Activated B cell treated with CpG ODN at 0.5 μM for 24 hours (primary cell): ENCODE measurements at regions of chr2 and their contacts with region 1.

Region 1: DNA sequence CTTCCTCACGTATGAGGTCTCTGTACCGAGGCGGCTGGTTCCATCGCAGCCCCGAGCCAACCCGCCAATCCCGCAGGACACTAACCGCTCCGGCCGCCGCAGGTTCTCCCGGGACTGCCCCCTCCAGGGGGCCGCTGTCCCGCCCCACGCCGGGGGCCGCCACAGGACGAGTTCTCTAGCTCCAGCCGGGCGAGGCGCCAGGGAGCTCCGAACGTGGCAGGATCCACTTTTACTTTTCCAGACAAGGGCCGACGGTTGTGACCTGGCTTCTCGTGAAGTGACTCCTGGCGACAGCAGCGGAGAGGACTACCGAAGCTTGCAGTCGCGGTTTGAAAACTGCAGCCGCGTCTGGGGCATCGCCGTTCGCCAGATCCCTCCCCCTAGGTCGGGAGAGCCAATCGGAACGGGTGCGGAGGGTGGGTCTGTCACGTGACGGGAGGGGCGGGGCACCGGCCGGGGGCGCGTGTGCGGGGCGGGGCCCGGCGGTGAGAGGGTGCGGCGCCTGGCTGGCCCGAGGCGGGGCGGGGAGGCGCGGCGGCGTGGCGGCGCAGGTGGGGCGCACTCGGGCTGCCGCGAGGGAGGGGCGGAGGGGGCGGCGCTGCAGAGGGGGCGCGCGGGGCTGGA is at the start of gene STK17B:
- DNase-seq: peak; percentile 88
- ATAC-seq: peak; percentile 64
- H3K4me3 Mint-ChIP-seq: peak within 1 kb of the TSS; percentile 99
- H3K27ac Mint-ChIP-seq: peak within 1 kb of the TSS; percentile 98
- H3K4me1 Mint-ChIP-seq: peaks cover 60% of the 10 kb centered on the region
- H3K27me3 Mint-ChIP-seq: no peaks in the 10 kb centered on the region
- CTCF ChIP-seq: no peak
- total RNA-seq, gene STK17B: 203 and 226 TPM in 2 replicates

Region 2: GRCh38 chr2:195967336-195967735 is 204.0 kb before region 1 on chr2:
- CTCF ChIA-PET with region 1: no interaction called
- POLR2A ChIA-PET with region 1: no interaction called
- intact Hi-C with region 1: no loop called
- DNase-seq: no peak
- ATAC-seq: no peak
- H3K4me3 Mint-ChIP-seq: no peak overlapping the region
- H3K27ac Mint-ChIP-seq: no peak overlapping the region
- H3K4me1 Mint-ChIP-seq: no peaks in the 10 kb centered on the region
- H3K27me3 Mint-ChIP-seq: peaks cover 6% of the 10 kb centered on the region
- CTCF ChIP-seq: no peak

Region 3: GRCh38 chr2:196076778-196077568 is 94.4 kb before region 1 on chr2:
- CTCF ChIA-PET with region 1: interaction called, 21 read pairs
- POLR2A ChIA-PET with region 1: interaction called, 19 read pairs
- intact Hi-C with region 1: loop called (anchors 1 kb)
- DNase-seq: no peak
- ATAC-seq: no peak
- H3K4me3 Mint-ChIP-seq: no peak overlapping the region
- H3K27ac Mint-ChIP-seq: peak overlapping the region; percentile 1
- H3K4me1 Mint-ChIP-seq: peaks cover 38% of the 10 kb centered on the region
- H3K27me3 Mint-ChIP-seq: no peaks in the 10 kb centered on the region
- CTCF ChIP-seq: no peak

Region 4: DNA sequence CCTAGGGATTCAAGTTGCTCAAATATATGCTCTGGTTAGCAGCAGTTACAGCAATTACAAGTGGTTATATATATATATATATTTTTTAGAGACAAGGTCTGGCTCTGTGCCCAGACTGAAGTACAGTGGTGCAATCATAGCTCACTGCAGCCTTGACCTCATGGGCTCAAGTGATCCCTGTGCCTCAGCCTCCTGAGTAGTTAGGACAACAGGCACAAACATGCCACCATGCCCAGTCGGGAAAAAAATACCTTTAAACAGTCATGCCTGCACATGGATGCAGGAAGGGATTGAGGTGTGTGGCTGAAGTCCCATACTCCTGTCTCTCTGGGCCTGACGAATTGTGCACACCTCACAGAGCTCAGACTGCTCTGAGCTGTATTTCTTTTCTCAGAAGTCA is 83.2 kb before region 1 on chr2:
- CTCF ChIA-PET with region 1: no interaction called
- POLR2A ChIA-PET with region 1: no interaction called
- intact Hi-C with region 1: no loop called
- DNase-seq: no peak
- ATAC-seq: no peak
- H3K4me3 Mint-ChIP-seq: no peak overlapping the region
- H3K27ac Mint-ChIP-seq: no peak overlapping the region
- H3K4me1 Mint-ChIP-seq: peaks cover 10% of the 10 kb centered on the region
- H3K27me3 Mint-ChIP-seq: no peaks in the 10 kb centered on the region
- CTCF ChIP-seq: no peak

Region 5: GRCh38 chr2:196149948-196150347 is 21.4 kb before region 1 on chr2:
- CTCF ChIA-PET with region 1: interaction called, 6 read pairs
- POLR2A ChIA-PET with region 1: interaction called, 23 read pairs
- intact Hi-C with region 1: loop called (anchors 1 kb)
- DNase-seq: no peak
- ATAC-seq: peak; percentile 71
- H3K4me3 Mint-ChIP-seq: peak overlapping the region; percentile 70
- H3K27ac Mint-ChIP-seq: peak overlapping the region; percentile 93
- H3K4me1 Mint-ChIP-seq: peaks cover 78% of the 10 kb centered on the region
- H3K27me3 Mint-ChIP-seq: no peaks in the 10 kb centered on the region
- CTCF ChIP-seq: no peak

Region 6: DNA sequence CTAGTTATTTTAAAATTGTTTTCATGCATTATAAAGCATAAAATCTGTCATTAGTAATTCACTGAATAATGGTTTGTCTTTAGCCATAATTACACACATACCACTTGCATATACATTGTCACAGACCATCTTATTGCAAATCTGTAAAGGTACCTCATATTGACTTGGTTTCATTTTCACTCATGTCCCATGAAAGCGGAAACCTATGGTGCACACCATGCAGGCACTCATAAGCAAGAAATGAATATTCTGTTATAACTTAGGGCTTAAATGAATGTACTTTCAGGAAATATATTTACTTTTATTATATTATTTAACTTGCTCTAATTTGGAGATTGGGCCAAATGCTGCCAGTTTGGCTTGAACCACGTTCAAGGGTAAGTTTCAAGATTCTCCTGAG is 29.2 kb after region 1 on chr2:
- CTCF ChIA-PET with region 1: interaction called, 3 read pairs
- POLR2A ChIA-PET with region 1: interaction called, 45 read pairs
- intact Hi-C with region 1: no loop called
- DNase-seq: no peak
- ATAC-seq: peak; percentile 82
- H3K4me3 Mint-ChIP-seq: peak overlapping the region; percentile 53
- H3K27ac Mint-ChIP-seq: peak overlapping the region; percentile 80
- H3K4me1 Mint-ChIP-seq: peaks cover 40% of the 10 kb centered on the region
- H3K27me3 Mint-ChIP-seq: no peaks in the 10 kb centered on the region
- CTCF ChIP-seq: no peak

Region 7: GRCh38 chr2:196239622-196240587 is 68.5 kb after region 1 on chr2:
- CTCF ChIA-PET with region 1: interaction called, 17 read pairs
- POLR2A ChIA-PET with region 1: interaction called, 543 read pairs
- intact Hi-C with region 1: loop called (anchors 1 kb)
- DNase-seq: peak; percentile 67
- ATAC-seq: peak; percentile 61
- H3K4me3 Mint-ChIP-seq: peak overlapping the region; percentile 41
- H3K27ac Mint-ChIP-seq: peak overlapping the region; percentile 100
- H3K4me1 Mint-ChIP-seq: peaks cover 89% of the 10 kb centered on the region
- H3K27me3 Mint-ChIP-seq: no peaks in the 10 kb centered on the region
- CTCF ChIP-seq: no peak

Region 8: DNA sequence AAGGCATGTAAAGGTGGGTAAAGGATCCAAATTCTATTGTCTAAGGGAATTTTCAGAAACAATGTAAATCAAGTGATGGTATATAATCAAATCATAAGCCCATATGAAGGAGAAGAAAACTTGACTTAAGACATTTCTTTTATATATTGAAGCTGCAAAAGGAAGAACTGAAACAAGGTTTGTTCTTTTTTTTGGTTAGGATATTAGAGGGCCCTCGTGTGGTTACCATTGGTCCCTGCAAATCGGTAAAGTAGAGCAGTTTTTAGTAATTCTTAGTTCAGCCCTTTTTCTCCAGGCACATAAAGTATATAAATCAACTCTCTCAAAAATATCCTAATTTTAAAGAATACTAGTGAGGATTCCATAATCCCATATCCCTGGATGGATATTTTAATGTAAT is 105.6 kb after region 1 on chr2:
- CTCF ChIA-PET with region 1: interaction called, 22 read pairs
- POLR2A ChIA-PET with region 1: interaction called, 114 read pairs
- intact Hi-C with region 1: loop called (anchors 1 kb)
- DNase-seq: no peak
- ATAC-seq: peak; percentile 48
- H3K4me3 Mint-ChIP-seq: no peak overlapping the region
- H3K27ac Mint-ChIP-seq: peak overlapping the region; percentile 95
- H3K4me1 Mint-ChIP-seq: peaks cover 41% of the 10 kb centered on the region
- H3K27me3 Mint-ChIP-seq: no peaks in the 10 kb centered on the region
- CTCF ChIP-seq: peak; percentile 34

Region 9: DNA sequence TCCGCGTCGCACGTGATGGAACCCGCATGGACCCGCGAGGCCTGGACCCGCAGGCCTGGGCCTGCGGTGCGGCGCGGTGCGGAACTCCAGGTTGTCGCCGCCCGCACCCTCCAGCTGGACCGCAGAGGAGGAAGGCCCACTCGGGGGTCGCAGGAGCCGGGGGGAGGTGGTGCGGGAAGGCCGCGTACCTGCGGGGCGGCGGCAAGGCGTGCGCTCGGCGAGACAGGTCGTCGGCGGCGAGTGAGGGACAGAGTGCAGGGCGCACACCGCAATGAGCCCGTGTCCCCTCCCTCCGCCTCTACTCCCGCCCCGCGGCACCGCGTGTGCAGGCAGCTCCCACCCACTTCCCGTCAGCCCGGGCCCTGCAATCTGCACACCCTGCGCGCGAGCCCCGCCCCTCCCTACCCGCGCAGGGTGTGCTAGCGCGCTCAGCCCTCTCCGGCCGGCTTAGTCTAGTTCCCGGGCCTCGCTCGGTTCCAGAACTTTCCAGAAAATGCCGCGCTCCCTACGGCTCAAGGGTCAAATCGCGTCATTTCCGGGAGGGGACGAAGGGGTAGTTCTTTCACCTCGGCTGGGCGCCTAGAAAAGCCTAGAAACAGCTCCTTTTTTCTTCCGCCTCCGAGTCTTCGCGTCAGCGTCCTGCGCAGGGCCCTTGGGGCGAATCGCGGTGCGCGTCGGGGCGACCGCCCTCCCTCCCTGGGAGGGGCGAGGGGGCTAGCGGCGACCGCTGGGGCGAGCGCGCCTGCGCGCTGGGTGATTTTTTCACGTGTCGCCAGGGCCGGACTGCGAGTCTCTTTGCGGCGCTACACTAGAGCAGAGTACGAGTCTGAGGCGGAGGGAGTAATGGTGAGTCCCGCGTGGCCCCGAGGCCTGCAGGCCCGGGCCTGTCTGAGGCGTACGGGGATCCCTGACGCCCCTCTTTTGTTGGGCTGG is 1328.5 kb after region 1 on chr2 and contains the starts of genes HSPD1 and HSPE1:
- CTCF ChIA-PET with region 1: no interaction called
- POLR2A ChIA-PET with region 1: interaction called, 3 read pairs
- intact Hi-C with region 1: loop called (anchors 2 kb)
- DNase-seq: peak; percentile 93
- ATAC-seq: peak; percentile 84
- H3K4me3 Mint-ChIP-seq: peak within 1 kb of the TSS; percentile 97
- H3K27ac Mint-ChIP-seq: peak within 1 kb of the TSS; percentile 94
- H3K4me1 Mint-ChIP-seq: peaks cover 59% of the 10 kb centered on the region
- H3K27me3 Mint-ChIP-seq: no peaks in the 10 kb centered on the region
- CTCF ChIP-seq: no peak
- total RNA-seq, gene HSPD1: 250 and 252 TPM in 2 replicates
- total RNA-seq, gene HSPE1: 108 and 116 TPM in 2 replicates